ENCODE measurements at regions of chr6 and their contacts with region 1.

Region 1: GRCh38 chr6:137951064-137951597 is 84.1 kb downstream of the TNFAIP3 start:
- DNase-seq: no peak
- ATAC-seq: no peak
- H3K4me3 Mint-ChIP-seq: no peak overlapping the region
- H3K27ac Mint-ChIP-seq: no peak overlapping the region
- H3K4me1 Mint-ChIP-seq: peaks cover 19% of the 10 kb centered on the region
- H3K27me3 Mint-ChIP-seq: no peaks in the 10 kb centered on the region

Region 2: DNA sequence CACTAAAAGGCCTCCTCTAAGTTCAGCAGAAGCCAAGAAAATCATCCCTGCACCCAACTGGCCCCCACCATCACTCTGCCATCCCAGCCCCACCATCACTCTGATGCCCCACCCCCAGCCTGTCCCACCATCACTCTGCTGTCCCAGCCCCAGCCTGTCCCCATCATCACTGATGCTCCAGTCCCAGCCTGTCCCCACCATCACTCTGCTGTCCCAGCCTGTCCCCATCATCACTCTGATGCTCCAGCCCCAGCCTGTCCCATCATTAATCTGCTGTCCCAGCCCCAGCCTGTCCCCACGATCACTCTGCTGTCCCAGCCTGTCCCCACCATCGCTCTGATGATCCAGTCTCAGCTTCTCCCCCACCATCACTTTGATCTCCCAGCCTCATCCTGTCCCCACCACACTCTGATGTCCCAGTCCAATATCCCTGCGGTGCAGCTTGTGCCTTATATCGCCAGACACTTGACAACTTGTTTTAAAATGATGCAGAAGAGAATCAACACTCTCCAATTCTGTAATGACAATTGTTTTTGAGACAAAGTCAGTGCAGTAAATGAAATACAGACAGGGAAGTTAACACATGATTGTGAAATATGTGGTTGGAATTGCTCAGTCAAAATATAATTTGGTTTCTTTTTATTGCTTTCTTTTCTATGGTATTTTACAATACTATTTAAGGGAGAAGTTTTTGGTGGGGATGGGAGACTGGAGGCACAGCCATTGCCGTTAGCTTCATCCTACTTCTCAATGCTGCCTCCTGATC is 16.7 kb after region 1 on chr6:
- CTCF ChIA-PET with region 1: interaction called, 28 read pairs
- DNase-seq: no peak
- ATAC-seq: no peak
- H3K4me3 Mint-ChIP-seq: no peak overlapping the region
- H3K27ac Mint-ChIP-seq: peak overlapping the region; percentile 54
- H3K4me1 Mint-ChIP-seq: peaks cover 42% of the 10 kb centered on the region
- H3K27me3 Mint-ChIP-seq: no peaks in the 10 kb centered on the region

Region 3: GRCh38 chr6:138222901-138223546 is 271.9 kb after region 1 on chr6:
- CTCF ChIA-PET with region 1: no interaction called
- DNase-seq: no peak
- ATAC-seq: no peak
- H3K4me3 Mint-ChIP-seq: no peak overlapping the region
- H3K27ac Mint-ChIP-seq: no peak overlapping the region
- H3K4me1 Mint-ChIP-seq: no peaks in the 10 kb centered on the region
- H3K27me3 Mint-ChIP-seq: peaks cover 45% of the 10 kb centered on the region